IMR-90 (cell line): ENCODE measurements at regions of chr11 and their contacts with region 1.

Region 1: GRCh38 chr11:106466521-106467080 is 389.1 kb downstream of the AASDHPPT start:
- DNase-seq: peak; percentile 94
- ATAC-seq: peak; percentile 82
- H3K4me3 ChIP-seq: no peak overlapping the region; the same call in 1 of the 2 replicates
- H3K27ac ChIP-seq: peak overlapping the region; percentile 88
- H3K4me1 ChIP-seq: peaks cover 15% of the 10 kb centered on the region
- H3K27me3 ChIP-seq: no peaks in the 10 kb centered on the region
- CTCF ChIP-seq: no peak
- POLR2A ChIP-seq: no peak
- RAD21 ChIP-seq: no peak

Region 2: GRCh38 chr11:106076919-106077608 is 389.5 kb before region 1 on chr11 and contains the start of gene KBTBD3:
- CTCF ChIA-PET with region 1: no interaction called
- POLR2A ChIA-PET with region 1: no interaction called
- dilution Hi-C with region 1: no loop called
- in situ Hi-C with region 1: no loop called
- intact Hi-C with region 1: loop called (anchors 10 kb)
- DNase-seq: peak; percentile 99
- ATAC-seq: peak; percentile 96
- H3K4me3 ChIP-seq: peak within 1 kb of the TSS; percentile 91
- H3K27ac ChIP-seq: peak within 1 kb of the TSS; percentile 97
- H3K4me1 ChIP-seq: no peaks in the 10 kb centered on the region; the same call in 1 of the 2 replicates
- H3K27me3 ChIP-seq: no peaks in the 10 kb centered on the region
- CTCF ChIP-seq: no peak; the same call in 1 of the 2 replicates
- POLR2A ChIP-seq: no peak
- RAD21 ChIP-seq: peak; percentile 9; the same call in 1 of the 2 replicates
- total RNA-seq, gene KBTBD3: 1.6 and 2.2 TPM in 2 replicates

Region 3: DNA sequence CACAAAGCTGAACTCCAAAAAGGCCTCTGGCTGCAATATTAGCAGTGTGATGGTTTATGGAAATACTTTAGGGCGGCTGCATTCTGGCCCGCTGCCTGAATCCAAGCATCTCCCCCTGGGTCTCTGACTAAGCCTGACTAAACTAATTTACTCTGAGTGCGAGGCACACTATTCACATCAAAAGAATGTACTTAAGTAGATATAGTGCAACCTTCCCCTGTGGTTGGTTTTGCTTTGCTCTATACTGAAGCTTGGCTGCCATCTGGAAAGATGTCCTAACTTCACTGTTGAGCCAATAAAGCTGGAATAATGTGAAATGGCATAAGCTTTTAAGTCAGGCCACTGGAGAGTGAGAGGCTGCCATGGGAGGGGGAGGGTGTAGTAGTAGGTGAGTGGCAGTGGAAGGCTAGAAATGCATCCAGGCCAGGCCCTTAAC is 67.5 kb before region 1 on chr11:
- CTCF ChIA-PET with region 1: no interaction called
- POLR2A ChIA-PET with region 1: no interaction called
- dilution Hi-C with region 1: no loop called
- in situ Hi-C with region 1: no loop called
- intact Hi-C with region 1: loop called (anchors 2 kb)
- DNase-seq: peak; percentile 100
- ATAC-seq: peak; percentile 96
- H3K4me3 ChIP-seq: no peak overlapping the region
- H3K27ac ChIP-seq: peak overlapping the region; percentile 90
- H3K4me1 ChIP-seq: peaks cover 15% of the 10 kb centered on the region
- H3K27me3 ChIP-seq: no peaks in the 10 kb centered on the region
- CTCF ChIP-seq: no peak
- POLR2A ChIP-seq: 0 out of 2 replicates have a peak, but pooled peaks have one; percentile 17
- RAD21 ChIP-seq: no peak; the same call in 1 of the 2 replicates

Region 4: DNA sequence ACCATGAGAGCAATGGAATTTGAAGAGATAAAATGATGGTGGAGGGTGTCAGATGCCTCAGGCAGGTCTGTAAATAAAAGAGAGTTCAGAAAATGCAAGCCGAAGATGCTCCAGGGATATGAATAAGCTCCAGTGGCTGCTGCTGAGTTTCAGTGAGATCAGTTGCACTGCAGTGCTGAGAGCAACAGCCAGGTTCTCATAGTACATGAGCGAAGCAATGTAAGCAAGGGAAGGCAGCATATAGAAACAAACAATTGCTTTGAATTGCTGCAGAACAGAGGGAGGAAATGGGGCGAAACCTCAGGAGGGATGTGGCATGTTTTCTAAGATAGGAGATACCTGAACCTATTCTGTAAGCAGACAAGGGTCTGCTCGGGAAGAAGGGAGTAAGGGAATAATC is 19.6 kb before region 1 on chr11:
- CTCF ChIA-PET with region 1: no interaction called
- POLR2A ChIA-PET with region 1: interaction called, 12 read pairs
- dilution Hi-C with region 1: no loop called
- in situ Hi-C with region 1: no loop called
- intact Hi-C with region 1: no loop called
- DNase-seq: no peak
- ATAC-seq: peak; percentile 78
- H3K4me3 ChIP-seq: no peak overlapping the region
- H3K27ac ChIP-seq: no peak overlapping the region
- H3K4me1 ChIP-seq: no peaks in the 10 kb centered on the region
- H3K27me3 ChIP-seq: no peaks in the 10 kb centered on the region
- CTCF ChIP-seq: no peak
- POLR2A ChIP-seq: no peak
- RAD21 ChIP-seq: no peak

Region 5: GRCh38 chr11:106482917-106483785 is 16.6 kb after region 1 on chr11:
- CTCF ChIA-PET with region 1: interaction called, 11 read pairs
- POLR2A ChIA-PET with region 1: no interaction called
- dilution Hi-C with region 1: no loop called
- in situ Hi-C with region 1: no loop called
- intact Hi-C with region 1: no loop called
- DNase-seq: peak; percentile 84
- ATAC-seq: peak; percentile 77
- H3K4me3 ChIP-seq: no peak overlapping the region
- H3K27ac ChIP-seq: peak overlapping the region; percentile 28; the same call in 1 of the 2 replicates
- H3K4me1 ChIP-seq: peaks cover 4% of the 10 kb centered on the region; the same call in 1 of the 2 replicates
- H3K27me3 ChIP-seq: no peaks in the 10 kb centered on the region
- CTCF ChIP-seq: no peak
- POLR2A ChIP-seq: no peak
- RAD21 ChIP-seq: no peak